Left lung (tissue), 14 donors: ENCODE measurements at regions of chr17 and their contacts with region 1.

Region 1: DNA sequence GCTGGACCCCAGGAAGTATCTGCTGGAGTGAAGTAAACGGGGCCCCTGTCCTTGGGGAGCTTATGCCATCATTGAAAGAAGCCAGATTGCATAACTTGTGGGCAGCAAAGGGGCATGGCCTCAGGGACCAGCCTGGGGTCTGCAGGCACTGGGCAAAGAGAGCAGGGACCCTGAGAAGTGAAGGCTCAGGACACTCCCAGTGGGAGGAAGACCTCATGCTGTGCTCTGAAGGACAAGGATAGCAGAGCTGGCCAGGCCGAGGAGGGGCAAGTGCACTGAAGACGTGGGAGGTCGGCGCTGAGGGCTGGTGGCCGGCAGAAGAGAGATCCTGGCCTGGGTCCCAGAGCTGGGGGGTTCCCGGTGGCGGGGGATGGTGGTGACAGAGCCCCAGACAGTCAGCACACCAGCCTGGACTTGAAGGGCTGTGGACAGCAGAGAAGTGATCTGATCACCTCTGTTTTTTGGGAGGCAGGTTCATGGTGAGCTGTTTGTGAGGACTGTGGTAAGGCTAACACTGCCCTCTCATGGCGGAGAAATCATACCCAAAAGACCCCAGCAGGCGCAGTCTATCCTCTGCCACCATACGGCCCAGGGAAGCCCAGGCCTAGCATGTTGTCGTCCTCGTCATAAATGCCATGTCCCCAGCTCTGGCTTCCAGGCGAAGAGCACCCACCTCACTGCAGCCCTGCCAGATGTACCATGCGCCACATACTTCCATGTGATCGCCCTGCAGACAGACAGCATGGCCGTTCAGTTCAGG is 7.1 kb upstream of the CNP start:
- DNase-seq: peak in 1 of 4 donors; percentile 34
- ATAC-seq: peak; percentile 75
- H3K4me3 ChIP-seq: no peak overlapping the region
- H3K27ac ChIP-seq: no peak overlapping the region
- H3K4me1 ChIP-seq: peaks cover 0 to 3% of the 10 kb centered on the region in 2 donors
- H3K27me3 ChIP-seq: no peaks in the 10 kb centered on the region
- CTCF ChIP-seq: no peak

Region 2: GRCh38 chr17:41811549-41812380 is 147.8 kb before region 1 on chr17 and contains the start of gene P3H4:
- intact Hi-C with region 1: no loop called
- DNase-seq: peak; percentile 80 to 92 (median 88)
- ATAC-seq: peak; percentile 90
- H3K4me3 ChIP-seq: peak within 1 kb of the TSS; percentile 63 to 74
- H3K27ac ChIP-seq: peak within 1 kb of the TSS; percentile 67 to 70
- H3K4me1 ChIP-seq: peaks cover 12 to 32% of the 10 kb centered on the region in 2 donors
- H3K27me3 ChIP-seq: peaks cover 0 to 36% of the 10 kb centered on the region in 2 donors
- CTCF ChIP-seq: peak; percentile 53 to 55
- polyA plus RNA-seq, gene P3H4: 28.5 to 47.1 (median 32.8) TPM

Region 3: DNA sequence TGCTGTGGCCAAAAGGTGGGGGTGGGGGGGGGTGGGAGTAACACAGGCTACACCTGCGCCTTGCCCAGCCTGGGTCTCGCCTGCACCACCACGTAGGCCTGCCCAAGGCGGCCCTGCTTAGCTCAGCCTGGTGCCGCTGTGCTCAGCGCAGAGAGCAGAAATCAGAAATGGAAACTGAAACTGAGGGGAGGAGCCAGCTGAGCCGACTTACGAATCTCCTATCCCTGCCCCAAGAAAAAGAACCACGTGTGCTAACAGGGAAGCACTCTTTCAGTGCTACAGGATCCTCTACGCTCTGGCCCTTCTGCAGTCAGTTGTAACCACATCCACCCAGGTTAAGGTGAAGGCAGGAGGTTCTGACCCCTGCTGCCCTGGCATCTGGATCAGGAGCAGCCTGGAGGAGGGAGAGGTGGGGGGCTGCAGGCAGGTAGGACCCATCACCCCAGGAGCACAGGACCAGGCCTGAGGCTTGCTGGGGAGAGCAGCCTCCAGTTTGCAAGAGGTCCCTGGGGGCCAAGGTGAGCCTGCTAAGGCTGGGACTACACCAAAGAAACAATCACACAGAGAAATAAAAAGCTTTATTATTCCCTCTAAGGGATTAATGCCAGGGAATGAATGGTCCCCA is 153.1 kb after region 1 on chr17 and contains the start of gene DHX58:
- intact Hi-C with region 1: loop called in 1 of 2 experiments (anchors 2 kb)
- DNase-seq: peak; percentile 70 to 87 (median 84)
- ATAC-seq: peak; percentile 90
- H3K4me3 ChIP-seq: peak within 1 kb of the TSS; percentile 39 to 55
- H3K27ac ChIP-seq: peak within 1 kb of the TSS; percentile 90 to 91
- H3K4me1 ChIP-seq: peaks cover 13 to 32% of the 10 kb centered on the region in 2 donors
- H3K27me3 ChIP-seq: no peaks in the 10 kb centered on the region
- CTCF ChIP-seq: no peak
- polyA plus RNA-seq, gene DHX58: 15.4 to 22.4 (median 18.5) TPM

Region 4: DNA sequence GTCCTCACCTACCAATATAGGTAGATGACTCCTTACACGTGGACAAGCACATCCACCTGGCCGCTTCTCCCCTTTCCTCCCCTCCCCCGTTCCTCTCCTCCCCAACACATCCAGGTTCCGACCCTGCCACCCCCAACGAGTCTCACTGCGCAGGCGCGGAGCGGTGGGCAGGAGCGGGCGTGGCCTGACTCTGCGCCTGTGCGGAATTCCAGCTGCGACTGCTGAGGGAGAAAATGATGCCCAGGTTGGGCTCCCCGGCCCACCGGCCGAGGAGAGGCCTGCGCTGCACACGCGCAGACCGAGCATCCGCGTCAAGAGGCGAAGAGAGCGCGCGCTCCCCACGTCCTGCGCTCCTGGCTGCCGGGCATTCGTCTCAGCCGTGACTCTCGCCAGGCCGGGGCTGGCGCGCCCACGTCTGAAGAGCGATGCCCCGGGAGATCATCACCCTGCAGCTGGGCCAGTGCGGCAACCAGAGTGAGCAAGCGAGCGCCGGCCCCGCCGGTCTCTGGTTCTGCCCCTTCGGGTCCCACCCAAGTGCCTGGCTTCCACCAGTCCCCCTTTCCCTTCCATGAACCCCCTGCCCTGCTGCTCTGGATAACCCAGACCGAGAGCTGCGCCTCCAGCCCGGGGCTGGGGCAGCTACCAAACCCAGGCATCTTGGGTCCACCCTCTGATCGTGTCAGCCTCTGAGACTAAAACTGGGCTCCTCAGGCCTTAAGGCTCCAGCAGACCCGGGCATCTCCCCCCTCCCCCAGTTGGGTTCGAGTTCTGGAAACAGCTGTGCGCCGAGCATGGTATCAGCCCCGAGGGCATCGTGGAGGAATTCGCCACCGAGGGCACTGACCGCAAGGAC is 699.8 kb after region 1 on chr17 and contains the start of gene TUBG2:
- intact Hi-C with region 1: no loop called
- DNase-seq: peak; percentile 85 to 95 (median 92)
- ATAC-seq: peak; percentile 95
- H3K4me3 ChIP-seq: peak within 1 kb of the TSS; percentile 70 to 85
- H3K27ac ChIP-seq: peak within 1 kb of the TSS; percentile 67 to 70
- H3K4me1 ChIP-seq: peaks cover 0 to 14% of the 10 kb centered on the region in 2 donors
- H3K27me3 ChIP-seq: peaks cover 0 to under 1% of the 10 kb centered on the region in 2 donors
- CTCF ChIP-seq: no peak
- polyA plus RNA-seq, gene TUBG2: 25.3 to 40.2 (median 32.5) TPM